ENCODE measurements at regions of chr13 and their contacts with region 1.

Region 1: DNA sequence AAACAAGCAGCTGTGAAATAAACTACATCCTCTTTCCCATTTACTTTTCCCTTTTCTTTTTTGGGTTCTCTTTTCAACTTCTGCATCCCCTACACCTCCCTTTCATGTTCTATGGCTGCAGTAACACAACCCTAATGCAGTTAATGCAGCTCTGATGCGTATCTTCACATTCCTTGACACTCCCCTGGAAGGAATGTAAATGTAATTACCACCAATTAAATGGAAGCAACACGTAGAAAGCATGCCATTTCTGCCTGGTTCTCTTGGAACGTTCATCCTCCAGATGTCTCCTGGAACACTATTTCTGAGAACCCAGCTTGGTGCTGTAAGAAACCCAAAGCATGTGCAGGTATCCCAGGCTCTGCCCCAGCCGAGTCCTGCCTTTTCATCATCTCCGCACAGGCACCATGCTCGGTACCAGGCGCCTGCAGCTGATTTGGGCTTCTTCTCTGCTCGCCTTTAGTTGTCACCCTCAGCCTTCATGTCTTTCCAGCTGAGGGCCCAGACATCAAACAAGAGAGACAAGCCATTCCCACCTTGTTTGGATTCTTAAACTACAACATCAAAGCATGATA is 166.7 kb upstream of the FREM2 start:
- DNase-seq: no peak
- H3K4me3 ChIP-seq: no peak overlapping the region
- H3K27ac ChIP-seq: no peak overlapping the region
- H3K4me1 ChIP-seq: no peaks in the 10 kb centered on the region
- H3K27me3 ChIP-seq: no peaks in the 10 kb centered on the region
- CTCF ChIP-seq: no peak
- POLR2A ChIP-seq: no peak

Region 2: DNA sequence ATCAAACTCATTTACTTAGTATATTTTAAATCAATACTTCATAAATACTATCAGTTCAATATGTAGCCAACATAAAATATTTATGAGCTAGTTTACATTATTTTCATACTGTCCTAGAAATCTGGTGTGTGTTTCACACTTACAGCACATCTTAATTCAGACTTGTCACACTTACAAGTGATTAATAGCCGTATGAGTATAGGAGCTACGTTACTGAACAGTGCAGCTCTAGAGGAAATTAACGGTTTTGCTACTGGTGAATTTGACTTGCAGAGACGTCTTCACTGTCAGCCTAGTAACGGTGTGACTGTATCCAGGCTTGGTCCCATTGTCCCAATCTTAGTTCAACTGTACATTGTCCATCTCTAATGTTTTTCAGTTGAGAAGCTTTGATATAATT is 887.8 kb before region 1 on chr13:
- intact Hi-C with region 1: loop called (anchors 5 kb)
- DNase-seq: no peak
- H3K4me3 ChIP-seq: no peak overlapping the region
- H3K27ac ChIP-seq: no peak overlapping the region
- H3K4me1 ChIP-seq: no peaks in the 10 kb centered on the region
- H3K27me3 ChIP-seq: no peaks in the 10 kb centered on the region
- CTCF ChIP-seq: no peak
- POLR2A ChIP-seq: no peak

Region 3: GRCh38 chr13:38239874-38240273 is 280.3 kb before region 1 on chr13:
- intact Hi-C with region 1: no loop called
- DNase-seq: no peak
- H3K4me3 ChIP-seq: no peak overlapping the region
- H3K27ac ChIP-seq: no peak overlapping the region
- H3K4me1 ChIP-seq: no peaks in the 10 kb centered on the region
- H3K27me3 ChIP-seq: no peaks in the 10 kb centered on the region
- CTCF ChIP-seq: no peak
- POLR2A ChIP-seq: no peak

Measured in breast epithelium (tissue), 4 donors.